ENCODE measurements at regions of chr7 and their contacts with region 1.

Region 1: GRCh38 chr7:36777062-36777461 is 52.8 kb upstream of the AOAH start:
- DNase-seq: peak; percentile 73 to 86 (median 82)
- H3K4me3 ChIP-seq: peak overlapping the region in 1 of 2 donors; percentile 28
- H3K4me3 Mint-ChIP-seq: peak overlapping the region; percentile 70 to 90 (median 85)
- H3K27ac ChIP-seq: peak overlapping the region; percentile 10
- H3K27ac Mint-ChIP-seq: peak overlapping the region; percentile 71 to 97 (median 95)
- H3K4me1 ChIP-seq: peaks cover 77% of the 10 kb centered on the region
- H3K4me1 Mint-ChIP-seq: peaks cover 63 to 85% (median 72%) of the 10 kb centered on the region in 4 donors
- H3K27me3 ChIP-seq: no peaks in the 10 kb centered on the region
- H3K27me3 Mint-ChIP-seq: no peaks in the 10 kb centered on the region

Region 2: GRCh38 chr7:36514289-36515243 is 262.5 kb before region 1 on chr7:
- CTCF ChIA-PET with region 1: no interaction called
- POLR2A ChIA-PET with region 1: no interaction called
- intact Hi-C with region 1: no loop called
- DNase-seq: no peak
- H3K4me3 ChIP-seq: no peak overlapping the region
- H3K4me3 Mint-ChIP-seq: no peak overlapping the region
- H3K27ac ChIP-seq: no peak overlapping the region
- H3K27ac Mint-ChIP-seq: peak overlapping the region in 2 of 7 donors; percentile 36 to 42
- H3K4me1 ChIP-seq: no peaks in the 10 kb centered on the region
- H3K4me1 Mint-ChIP-seq: peaks cover 0 to 13% (median 9%) of the 10 kb centered on the region in 4 donors
- H3K27me3 ChIP-seq: no peaks in the 10 kb centered on the region
- H3K27me3 Mint-ChIP-seq: no peaks in the 10 kb centered on the region

Region 3: GRCh38 chr7:36723951-36724664 is 53.0 kb before region 1 on chr7 and contains the start of gene AOAH:
- CTCF ChIA-PET with region 1: no interaction called
- POLR2A ChIA-PET with region 1: interaction called, 6 read pairs
- intact Hi-C with region 1: loop called (anchors 1 kb)
- DNase-seq: peak; percentile 81 to 87 (median 82)
- H3K4me3 ChIP-seq: peak within 1 kb of the TSS in 1 of 2 donors; percentile 34
- H3K4me3 Mint-ChIP-seq: peak within 1 kb of the TSS; percentile 57 to 91 (median 83)
- H3K27ac ChIP-seq: peak within 1 kb of the TSS; percentile 37
- H3K27ac Mint-ChIP-seq: peak within 1 kb of the TSS; percentile 78 to 95 (median 91)
- H3K4me1 ChIP-seq: peaks cover 72% of the 10 kb centered on the region
- H3K4me1 Mint-ChIP-seq: peaks cover 54 to 83% (median 67%) of the 10 kb centered on the region in 4 donors
- H3K27me3 ChIP-seq: no peaks in the 10 kb centered on the region
- H3K27me3 Mint-ChIP-seq: no peaks in the 10 kb centered on the region
- total RNA-seq, gene AOAH: 4.5 to 5.4 TPM

Region 4: GRCh38 chr7:36736899-36737211 is 40.2 kb before region 1 on chr7:
- CTCF ChIA-PET with region 1: no interaction called
- POLR2A ChIA-PET with region 1: interaction called, 6 read pairs
- intact Hi-C with region 1: loop called (anchors 5 kb)
- DNase-seq: no peak
- H3K4me3 ChIP-seq: no peak overlapping the region
- H3K4me3 Mint-ChIP-seq: peak overlapping the region in 7 of 8 donors; percentile 2 to 72 (median 46)
- H3K27ac ChIP-seq: no peak overlapping the region
- H3K27ac Mint-ChIP-seq: peak overlapping the region in 6 of 7 donors; percentile 26 to 85 (median 78)
- H3K4me1 ChIP-seq: peaks cover 13% of the 10 kb centered on the region
- H3K4me1 Mint-ChIP-seq: peaks cover 11 to 23% (median 15%) of the 10 kb centered on the region in 4 donors
- H3K27me3 ChIP-seq: no peaks in the 10 kb centered on the region
- H3K27me3 Mint-ChIP-seq: no peaks in the 10 kb centered on the region

Region 5: GRCh38 chr7:36790311-36790787 is 13.3 kb after region 1 on chr7:
- CTCF ChIA-PET with region 1: interaction called, 11 read pairs
- POLR2A ChIA-PET with region 1: interaction called, 58 read pairs
- intact Hi-C with region 1: loop called (anchors 2 kb)
- DNase-seq: no peak
- H3K4me3 ChIP-seq: no peak overlapping the region
- H3K4me3 Mint-ChIP-seq: peak overlapping the region in 3 of 8 donors; percentile 4 to 32 (median 11)
- H3K27ac ChIP-seq: no peak overlapping the region
- H3K27ac Mint-ChIP-seq: peak overlapping the region in 5 of 7 donors; percentile 67 to 95 (median 83)
- H3K4me1 ChIP-seq: peaks cover 63% of the 10 kb centered on the region
- H3K4me1 Mint-ChIP-seq: peaks cover 56 to 68% (median 58%) of the 10 kb centered on the region in 4 donors
- H3K27me3 ChIP-seq: no peaks in the 10 kb centered on the region
- H3K27me3 Mint-ChIP-seq: no peaks in the 10 kb centered on the region

Region 6: GRCh38 chr7:36875794-36876193 is 98.7 kb after region 1 on chr7:
- CTCF ChIA-PET with region 1: no interaction called
- POLR2A ChIA-PET with region 1: no interaction called
- intact Hi-C with region 1: loop called (anchors 5 kb)
- DNase-seq: no peak
- H3K4me3 ChIP-seq: no peak overlapping the region
- H3K4me3 Mint-ChIP-seq: no peak overlapping the region
- H3K27ac ChIP-seq: no peak overlapping the region
- H3K27ac Mint-ChIP-seq: peak overlapping the region in 1 of 7 donors; percentile 73
- H3K4me1 ChIP-seq: no peaks in the 10 kb centered on the region
- H3K4me1 Mint-ChIP-seq: peaks cover 2 to 6% (median 4%) of the 10 kb centered on the region in 4 donors
- H3K27me3 ChIP-seq: no peaks in the 10 kb centered on the region
- H3K27me3 Mint-ChIP-seq: no peaks in the 10 kb centered on the region

Measured in CD4-positive, alpha-beta memory T cell (primary cell).